Posterior cingulate gyrus (tissue), 11 donors: ENCODE measurements at regions of chr15 and their contacts with region 1.

Region 1: GRCh38 chr15:68620721-68621527 is 42.1 kb downstream of the CORO2B start:
- DNase-seq: peak; percentile 79 to 97 (median 86)

Region 2: GRCh38 chr15:68511073-68511991 is 109.6 kb before region 1 on chr15:
- intact Hi-C with region 1: no loop called
- DNase-seq: no peak

Region 3: GRCh38 chr15:68586274-68586961 is 34.5 kb before region 1 on chr15:
- intact Hi-C with region 1: loop called (anchors 5 kb)
- DNase-seq: peak in 2 of 10 donors; percentile 12 to 71